Endothelial cell of umbilical vein (primary cell): ENCODE measurements at regions of chr9 and their contacts with region 1.

Region 1: GRCh38 chr9:70602321-70603019 is 188.0 kb upstream of the KLF9 start:
- DNase-seq: peak; percentile 87
- H3K4me3 ChIP-seq: no peak overlapping the region
- H3K27ac ChIP-seq: peak overlapping the region; percentile 73
- H3K4me1 ChIP-seq: peaks cover 17% of the 10 kb centered on the region
- H3K27me3 ChIP-seq: no peaks in the 10 kb centered on the region
- CTCF ChIP-seq: peak; percentile 66 to 77
- POLR2A ChIP-seq: no peak

Region 2: DNA sequence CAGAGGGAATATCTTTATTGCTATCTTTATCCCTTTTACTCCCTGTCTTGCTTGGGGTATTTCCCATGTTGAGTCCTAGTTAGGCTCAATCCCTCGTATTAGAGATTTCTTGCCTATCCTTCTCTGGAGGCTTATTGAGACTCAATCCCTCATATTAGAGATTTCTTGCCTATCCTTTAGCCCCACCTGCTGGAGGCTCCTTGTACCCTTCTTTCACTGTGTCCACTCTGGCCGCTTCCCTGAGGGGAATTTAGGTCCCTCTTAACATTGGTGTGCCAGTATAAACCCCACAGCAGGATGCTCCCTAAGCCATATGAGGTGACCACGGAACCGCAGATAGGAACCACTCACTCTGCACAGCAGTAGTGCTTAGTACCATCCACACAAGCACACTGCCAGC is 669.6 kb before region 1 on chr9:
- CTCF ChIA-PET with region 1: interaction called, 7 read pairs
- POLR2A ChIA-PET with region 1: no interaction called
- dilution Hi-C with region 1: no loop called
- intact Hi-C with region 1: loop called (anchors 5 kb)
- DNase-seq: peak; percentile 44
- H3K4me3 ChIP-seq: no peak overlapping the region
- H3K27ac ChIP-seq: no peak overlapping the region
- H3K4me1 ChIP-seq: no peaks in the 10 kb centered on the region
- H3K27me3 ChIP-seq: peaks cover 4% of the 10 kb centered on the region in 2 experiments
- CTCF ChIP-seq: peak; percentile 28 to 48
- POLR2A ChIP-seq: no peak

Region 3: GRCh38 chr9:70258692-70259511 is 343.6 kb before region 1 on chr9 and contains the start of gene SMC5:
- CTCF ChIA-PET with region 1: interaction called, 13 read pairs
- POLR2A ChIA-PET with region 1: no interaction called
- dilution Hi-C with region 1: no loop called
- intact Hi-C with region 1: loop called (anchors 1 kb)
- DNase-seq: peak; percentile 95
- H3K4me3 ChIP-seq: peak within 1 kb of the TSS; percentile 74 to 95 (median 87)
- H3K27ac ChIP-seq: peak within 1 kb of the TSS; percentile 93
- H3K4me1 ChIP-seq: peaks cover 40% of the 10 kb centered on the region
- H3K27me3 ChIP-seq: no peaks in the 10 kb centered on the region
- CTCF ChIP-seq: no peak
- POLR2A ChIP-seq: peak; percentile 95
- total RNA-seq, gene SMC5: 24.3 and 32.8 TPM in 2 replicates

Region 4: GRCh38 chr9:70392189-70392588 is 210.3 kb before region 1 on chr9:
- CTCF ChIA-PET with region 1: interaction called, 24 read pairs
- POLR2A ChIA-PET with region 1: no interaction called
- dilution Hi-C with region 1: no loop called
- intact Hi-C with region 1: loop called (anchors 1 kb)
- DNase-seq: peak; percentile 12
- H3K4me3 ChIP-seq: no peak overlapping the region
- H3K27ac ChIP-seq: no peak overlapping the region
- H3K4me1 ChIP-seq: peaks cover 32% of the 10 kb centered on the region
- H3K27me3 ChIP-seq: no peaks in the 10 kb centered on the region
- CTCF ChIP-seq: peak in 1 of 2 donors; percentile 15
- POLR2A ChIP-seq: no peak

Region 5: DNA sequence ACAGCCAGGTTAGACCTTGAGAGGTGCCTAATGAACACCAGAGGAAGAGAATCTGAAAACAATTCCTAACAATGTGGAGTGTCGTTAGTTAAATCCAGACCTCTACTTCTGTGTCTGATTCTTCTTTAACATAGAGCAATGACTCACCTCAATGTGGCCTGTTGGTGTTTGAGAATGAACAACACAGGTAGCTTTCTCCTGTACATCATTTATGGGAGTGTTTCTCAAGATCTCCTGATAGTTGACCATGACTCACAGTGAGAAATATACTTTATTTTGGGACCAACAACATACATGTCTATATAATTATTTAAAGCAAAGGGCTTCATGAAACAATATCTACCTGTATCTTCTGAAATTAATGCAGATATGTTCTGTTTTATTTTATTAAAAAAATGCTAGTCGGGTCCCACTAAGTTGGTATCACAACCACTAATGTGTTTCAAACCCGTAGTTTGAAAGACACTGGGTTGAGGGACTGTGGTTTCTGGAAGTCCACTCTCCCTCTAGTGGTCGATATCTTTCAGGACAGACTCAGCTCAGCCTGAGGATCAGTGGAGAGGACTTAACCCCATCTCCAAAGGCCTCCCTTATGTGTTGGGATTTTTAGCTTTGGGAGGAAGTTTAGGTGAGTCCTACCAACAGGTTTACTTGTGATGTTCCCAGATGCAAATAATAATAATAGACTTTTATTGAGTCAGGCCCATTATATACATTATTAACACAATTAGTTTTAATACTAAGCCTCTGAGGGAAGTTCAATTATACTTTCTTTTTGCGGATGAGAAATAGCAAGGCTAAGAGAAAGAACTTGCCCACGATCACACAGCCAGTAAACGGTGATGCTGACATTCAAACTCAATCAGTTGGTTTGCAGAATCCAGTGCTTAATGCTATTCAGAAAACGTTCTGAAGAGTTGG is 118.0 kb before region 1 on chr9:
- CTCF ChIA-PET with region 1: interaction called, 54 read pairs
- POLR2A ChIA-PET with region 1: no interaction called
- dilution Hi-C with region 1: no loop called
- intact Hi-C with region 1: loop called (anchors 1 kb)
- DNase-seq: peak; percentile 81
- H3K4me3 ChIP-seq: no peak overlapping the region
- H3K27ac ChIP-seq: no peak overlapping the region
- H3K4me1 ChIP-seq: peaks cover 23% of the 10 kb centered on the region
- H3K27me3 ChIP-seq: no peaks in the 10 kb centered on the region
- CTCF ChIP-seq: peak; percentile 68 to 89
- POLR2A ChIP-seq: no peak

Region 6: DNA sequence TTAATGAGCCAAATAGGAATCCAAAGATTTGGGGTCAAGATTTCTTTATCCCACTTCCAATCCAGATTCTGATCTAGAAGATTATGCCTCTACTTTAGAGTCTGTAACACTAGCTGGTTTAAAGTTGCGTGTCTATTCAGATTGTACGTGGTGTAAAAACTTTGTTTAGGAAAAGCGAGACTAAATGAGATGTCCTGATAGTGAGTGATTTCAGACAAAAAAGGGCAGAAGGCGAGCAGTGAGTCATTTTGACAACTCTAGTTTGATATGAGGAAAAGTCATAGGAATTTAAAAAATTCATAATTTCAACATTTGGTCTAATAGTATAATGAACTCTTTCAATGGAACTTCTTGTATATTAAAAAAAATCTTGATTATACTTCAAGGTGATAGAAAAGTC is 68.4 kb before region 1 on chr9:
- CTCF ChIA-PET with region 1: interaction called, 7 read pairs
- POLR2A ChIA-PET with region 1: no interaction called
- dilution Hi-C with region 1: no loop called
- intact Hi-C with region 1: loop called (anchors 1 kb)
- DNase-seq: peak; percentile 80
- H3K4me3 ChIP-seq: no peak overlapping the region
- H3K27ac ChIP-seq: peak overlapping the region; percentile 84
- H3K4me1 ChIP-seq: peaks cover 32% of the 10 kb centered on the region
- H3K27me3 ChIP-seq: no peaks in the 10 kb centered on the region
- CTCF ChIP-seq: no peak
- POLR2A ChIP-seq: no peak

Region 7: GRCh38 chr9:70679845-70680244 is 77.4 kb after region 1 on chr9:
- CTCF ChIA-PET with region 1: no interaction called
- POLR2A ChIA-PET with region 1: no interaction called
- dilution Hi-C with region 1: no loop called
- intact Hi-C with region 1: no loop called
- DNase-seq: no peak
- H3K4me3 ChIP-seq: no peak overlapping the region
- H3K27ac ChIP-seq: no peak overlapping the region
- H3K4me1 ChIP-seq: no peaks in the 10 kb centered on the region
- H3K27me3 ChIP-seq: no peaks in the 10 kb centered on the region
- CTCF ChIP-seq: no peak
- POLR2A ChIP-seq: no peak

Region 8: GRCh38 chr9:70921136-70921535 is 318.7 kb after region 1 on chr9:
- CTCF ChIA-PET with region 1: no interaction called
- POLR2A ChIA-PET with region 1: no interaction called
- dilution Hi-C with region 1: no loop called
- intact Hi-C with region 1: no loop called
- DNase-seq: no peak
- H3K4me3 ChIP-seq: no peak overlapping the region
- H3K27ac ChIP-seq: no peak overlapping the region
- H3K4me1 ChIP-seq: peaks cover 8% of the 10 kb centered on the region
- H3K27me3 ChIP-seq: no peaks in the 10 kb centered on the region
- CTCF ChIP-seq: no peak
- POLR2A ChIP-seq: no peak